ENCODE measurements at regions of chr7 and their contacts with region 1.

Region 1: DNA sequence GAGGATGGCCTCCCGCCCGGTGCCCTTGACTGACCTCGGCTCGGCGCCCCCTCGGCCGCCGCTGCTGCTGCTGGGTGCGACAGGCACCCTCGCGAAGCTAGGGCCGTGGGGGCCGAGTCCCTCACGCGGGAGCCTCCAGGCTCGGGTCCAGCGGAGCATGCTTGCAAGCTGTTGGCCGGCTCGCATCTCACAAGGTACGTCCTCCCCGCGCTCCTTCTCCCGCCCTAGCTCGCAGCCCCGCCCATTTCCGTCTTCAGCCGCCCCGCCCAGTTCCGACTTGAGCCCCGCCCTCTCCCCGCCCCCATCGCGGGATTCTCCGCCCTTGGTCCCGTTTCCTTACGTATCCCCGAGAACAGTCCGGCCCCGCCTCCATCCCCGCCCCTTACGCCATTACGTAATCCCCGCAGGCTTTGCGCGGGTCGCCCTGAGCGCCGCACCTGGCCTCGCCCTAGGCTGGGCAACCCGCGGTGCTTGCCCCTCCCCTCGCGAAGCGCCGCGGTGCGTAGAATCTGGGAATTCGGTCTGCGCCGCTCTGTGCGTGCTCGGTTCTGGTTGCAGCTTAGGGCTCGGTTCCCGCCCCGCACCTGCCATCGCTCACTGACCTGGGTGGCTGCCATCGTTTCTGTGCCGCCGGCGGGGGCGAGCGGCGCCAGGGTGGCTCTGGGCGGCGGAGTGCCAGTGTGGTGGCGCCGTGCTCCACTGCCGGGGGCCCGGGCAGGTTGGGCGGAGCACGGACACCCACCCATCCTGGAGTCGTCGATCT is at the start of gene ABHD11:
- DNase-seq: peak; percentile 61
- H3K4me3 ChIP-seq: peak within 1 kb of the TSS; percentile 93
- CTCF ChIP-seq: no peak

Region 2: DNA sequence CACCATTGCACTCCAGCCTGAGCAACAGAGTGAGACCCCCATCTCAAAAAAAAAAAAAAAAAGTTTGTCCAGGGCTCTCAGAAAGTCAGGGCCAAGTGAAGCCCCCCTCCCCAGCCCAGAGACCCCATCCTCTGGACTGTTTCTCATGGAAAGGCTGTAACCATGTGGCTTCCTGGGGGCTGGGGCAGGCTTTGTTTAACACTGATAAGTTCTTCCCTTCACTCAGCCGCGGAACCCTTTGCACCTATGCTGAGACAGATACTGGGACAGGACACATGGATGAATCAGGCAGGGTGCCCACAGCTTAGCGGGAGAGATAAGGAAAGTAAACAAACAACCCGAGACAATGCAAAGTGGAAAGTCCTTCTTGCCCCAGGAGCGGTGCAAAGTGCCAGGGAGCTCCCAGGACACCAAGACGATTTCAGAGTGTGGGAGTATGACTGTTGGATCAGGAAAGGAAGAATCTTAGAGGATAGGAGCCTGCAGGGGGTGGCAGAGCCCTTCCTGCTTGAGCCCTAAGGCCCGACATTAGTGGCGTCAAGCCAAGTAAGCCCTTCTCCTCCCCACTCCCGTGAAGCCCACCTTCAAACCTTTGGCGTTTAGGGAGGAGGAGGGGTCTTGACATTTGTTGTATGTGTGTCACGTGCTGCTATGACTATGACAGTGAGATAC is 126.1 kb before region 1 on chr7:
- CTCF ChIA-PET with region 1: interaction called, 231 read pairs
- POLR2A ChIA-PET with region 1: no interaction called
- DNase-seq: no peak
- H3K4me3 ChIP-seq: no peak overlapping the region
- CTCF ChIP-seq: no peak

Region 3: GRCh38 chr7:73856941-73857340 is 118.1 kb after region 1 on chr7:
- CTCF ChIA-PET with region 1: interaction called, 39 read pairs
- POLR2A ChIA-PET with region 1: no interaction called
- DNase-seq: no peak
- H3K4me3 ChIP-seq: no peak overlapping the region
- CTCF ChIP-seq: no peak